ENCODE measurements at regions of chr1 and their contacts with region 1.

Region 1: GRCh38 chr1:32716312-32717148 is 14.0 kb upstream of the SYNC start:
- DNase-seq: peak; percentile 97 to 99 (median 98)
- ATAC-seq: peak; percentile 92
- H3K4me3 ChIP-seq: no peak overlapping the region
- H3K4me1 ChIP-seq: peaks cover 7% of the 10 kb centered on the region
- CTCF ChIP-seq: no peak

Region 2: GRCh38 chr1:32773018-32773763 is 56.7 kb after region 1 on chr1:
- intact Hi-C with region 1: loop called (anchors 5 kb)
- DNase-seq: peak; percentile 82 to 92 (median 90)
- ATAC-seq: peak; percentile 87
- H3K4me3 ChIP-seq: no peak overlapping the region
- H3K4me1 ChIP-seq: no peaks in the 10 kb centered on the region
- CTCF ChIP-seq: peak; percentile 83

Region 3: DNA sequence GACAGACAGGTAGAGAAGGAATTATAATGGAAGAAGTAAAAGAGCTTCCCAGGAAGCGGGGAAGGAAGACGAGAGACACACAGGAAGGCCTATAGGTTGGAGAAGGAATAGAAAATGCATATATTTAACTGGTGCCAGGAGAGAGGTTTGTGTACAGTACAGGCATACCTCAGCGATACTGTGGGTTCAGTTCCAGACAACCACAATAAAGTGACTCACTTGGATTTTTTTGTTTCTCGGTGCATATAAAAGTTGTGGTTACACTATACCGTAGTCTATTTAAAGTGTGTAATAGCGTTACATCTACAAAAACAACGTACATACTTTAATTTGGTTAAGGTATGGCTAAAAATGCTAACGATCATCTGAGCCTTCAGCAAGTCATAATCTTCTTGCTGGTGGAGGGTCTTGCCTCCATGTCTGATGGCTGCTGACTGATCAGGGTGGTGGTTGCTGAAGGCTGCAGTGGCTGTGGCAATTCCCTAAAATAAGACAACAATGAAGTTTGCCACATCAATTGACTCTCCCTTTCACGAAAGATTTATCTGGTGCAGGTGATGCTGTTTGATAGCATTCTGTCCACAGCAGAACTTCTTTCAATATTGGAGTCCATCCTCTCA is 84.7 kb after region 1 on chr1:
- intact Hi-C with region 1: no loop called
- DNase-seq: no peak
- ATAC-seq: peak; percentile 37
- H3K4me3 ChIP-seq: no peak overlapping the region
- H3K4me1 ChIP-seq: no peaks in the 10 kb centered on the region
- CTCF ChIP-seq: no peak

Region 4: GRCh38 chr1:33802268-33802667 is 1085.7 kb after region 1 on chr1:
- intact Hi-C with region 1: no loop called
- DNase-seq: no peak
- ATAC-seq: no peak
- H3K4me3 ChIP-seq: no peak overlapping the region
- H3K4me1 ChIP-seq: no peaks in the 10 kb centered on the region
- CTCF ChIP-seq: no peak

Measured in mucosa of descending colon (tissue), 3 donors.